ENCODE measurements at regions of chr5 and their contacts with region 1.

Region 1: GRCh38 chr5:169650701-169651331 is 13.7 kb downstream of the DOCK2 start:
- DNase-seq: no peak
- H3K4me3 Mint-ChIP-seq: peak overlapping the region; percentile 67
- H3K27ac Mint-ChIP-seq: peak overlapping the region; percentile 95
- H3K4me1 Mint-ChIP-seq: peaks cover 95% of the 10 kb centered on the region
- H3K27me3 Mint-ChIP-seq: no peaks in the 10 kb centered on the region

Region 2: DNA sequence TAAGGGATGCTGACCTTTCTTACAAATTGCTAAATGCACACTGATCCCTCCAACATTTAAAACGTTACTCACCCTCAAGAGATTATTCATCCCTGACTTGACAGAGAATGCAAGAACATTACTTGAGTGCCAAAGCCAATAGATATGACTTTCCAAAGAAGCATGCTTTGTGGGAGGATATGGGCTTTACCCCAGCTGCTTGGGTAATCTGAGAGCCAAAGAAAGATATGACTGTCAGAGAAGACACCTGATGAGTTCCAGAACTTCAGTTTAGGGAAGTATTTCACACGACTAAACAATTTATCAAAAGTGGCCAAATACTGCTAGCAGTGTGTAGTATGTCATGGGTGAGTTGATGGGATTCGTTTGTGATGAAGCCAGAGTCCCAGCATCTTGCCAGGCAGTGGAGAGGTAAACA is 74.6 kb before region 1 on chr5:
- intact Hi-C with region 1: no loop called
- DNase-seq: no peak
- H3K4me3 Mint-ChIP-seq: no peak overlapping the region
- H3K27ac Mint-ChIP-seq: no peak overlapping the region
- H3K4me1 Mint-ChIP-seq: peaks cover 5% of the 10 kb centered on the region
- H3K27me3 Mint-ChIP-seq: peaks cover 52% of the 10 kb centered on the region

Region 3: GRCh38 chr5:169637085-169637548 is 13.7 kb before region 1 on chr5 and contains the start of gene DOCK2:
- intact Hi-C with region 1: loop called (anchors 1 kb)
- DNase-seq: peak; percentile 69
- H3K4me3 Mint-ChIP-seq: peak within 1 kb of the TSS; percentile 89
- H3K27ac Mint-ChIP-seq: peak within 1 kb of the TSS; percentile 91
- H3K4me1 Mint-ChIP-seq: peaks cover 40% of the 10 kb centered on the region
- H3K27me3 Mint-ChIP-seq: peaks cover 2% of the 10 kb centered on the region
- total RNA-seq, gene DOCK2: 217 and 246 TPM in 2 replicates

Region 4: GRCh38 chr5:169701910-169702451 is 51.2 kb after region 1 on chr5:
- intact Hi-C with region 1: loop called (anchors 1 kb)
- DNase-seq: no peak
- H3K4me3 Mint-ChIP-seq: no peak overlapping the region
- H3K27ac Mint-ChIP-seq: peak overlapping the region; percentile 75
- H3K4me1 Mint-ChIP-seq: peaks cover 38% of the 10 kb centered on the region
- H3K27me3 Mint-ChIP-seq: no peaks in the 10 kb centered on the region

Region 5: DNA sequence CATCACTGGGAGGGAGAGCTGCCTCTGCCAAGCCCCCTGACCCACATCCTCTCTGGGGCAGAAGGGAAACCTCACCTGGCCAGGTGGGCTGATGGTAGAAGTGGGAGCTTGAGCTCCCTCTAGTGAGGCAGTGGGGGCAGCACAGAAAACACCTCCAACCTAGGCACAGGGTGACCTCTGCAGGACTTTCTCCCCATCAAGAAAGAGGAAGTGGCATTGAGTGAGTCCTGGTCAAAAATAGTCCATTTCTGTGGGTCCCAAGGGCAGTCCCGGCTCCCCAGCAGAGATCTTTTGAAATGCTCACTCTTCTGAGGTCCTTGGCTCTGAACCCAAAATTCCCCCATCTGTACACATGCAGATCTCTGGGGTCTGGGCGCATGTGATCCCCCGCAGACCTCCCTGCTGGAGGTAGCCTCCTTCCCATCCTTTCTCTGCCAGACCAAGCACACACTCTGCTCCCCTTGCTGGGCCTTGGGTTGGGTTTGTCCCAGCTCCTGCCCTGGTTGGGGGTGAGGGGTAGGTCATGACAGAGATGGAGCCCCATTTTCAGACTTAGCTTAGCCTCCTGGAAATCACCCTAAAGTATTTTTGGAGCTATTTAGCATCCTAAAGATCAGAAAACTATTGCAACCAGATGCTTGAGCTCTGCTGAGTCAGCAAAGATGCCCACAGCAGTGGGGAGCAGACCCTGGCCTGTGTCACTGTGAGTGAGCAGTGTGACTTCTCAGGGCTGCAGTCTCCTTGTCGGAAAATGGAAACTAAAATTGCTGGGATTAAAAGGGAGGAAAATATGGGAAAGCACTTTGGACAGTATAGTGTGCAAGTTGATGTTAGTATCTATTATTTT is 688.3 kb after region 1 on chr5:
- intact Hi-C with region 1: loop called (anchors 10 kb)
- DNase-seq: peak; percentile 49
- H3K4me3 Mint-ChIP-seq: no peak overlapping the region
- H3K27ac Mint-ChIP-seq: no peak overlapping the region
- H3K4me1 Mint-ChIP-seq: peaks cover 46% of the 10 kb centered on the region
- H3K27me3 Mint-ChIP-seq: peaks cover 10% of the 10 kb centered on the region